Gastrocnemius medialis (tissue), 4 donors: ENCODE measurements at regions of chr18 and their contacts with region 1.

Region 1: DNA sequence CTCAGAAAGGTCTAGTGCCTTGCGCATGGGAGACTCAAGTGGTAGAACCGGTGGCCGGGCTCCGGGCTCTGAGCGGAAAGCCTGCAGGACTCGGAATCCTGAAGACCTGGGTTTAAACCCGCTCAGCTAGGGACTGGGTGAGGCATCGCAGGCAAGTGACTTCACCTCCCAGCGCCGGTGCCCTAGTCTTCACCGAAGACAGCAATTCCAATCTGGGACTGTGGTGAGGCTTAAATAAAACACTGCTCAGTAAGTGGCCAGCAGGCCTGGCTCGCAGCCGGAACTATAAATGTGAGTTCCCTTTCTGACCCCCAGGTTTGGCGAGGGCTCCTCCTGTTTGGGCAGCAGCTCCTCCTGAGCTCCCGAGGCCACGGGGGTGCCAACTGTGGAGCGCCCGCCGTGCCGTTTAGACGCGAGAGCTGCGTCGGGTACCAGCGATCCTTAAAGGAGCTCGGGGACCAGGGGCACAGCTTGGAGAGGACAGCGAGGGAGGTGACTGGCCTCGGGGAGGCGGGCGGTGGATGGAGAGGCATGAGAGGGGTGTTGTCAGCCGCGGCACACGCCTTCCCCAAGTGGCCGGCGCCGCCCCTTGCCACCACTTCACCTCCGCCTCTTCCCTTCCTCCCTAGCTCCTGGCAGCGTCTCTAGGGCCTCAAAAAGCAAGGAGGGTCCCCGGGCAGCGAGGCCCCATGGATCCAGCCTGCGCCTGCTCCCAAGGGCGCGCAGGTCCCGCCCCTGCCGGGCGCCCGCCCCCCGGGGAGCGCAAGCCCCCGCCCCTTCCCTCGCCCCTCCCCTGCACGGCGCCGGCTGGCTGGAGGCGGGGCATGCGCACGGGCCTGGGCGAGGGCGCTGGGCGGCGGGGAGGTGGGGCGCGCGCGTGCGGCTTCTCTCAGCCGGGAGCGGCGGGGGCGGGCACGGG is 736 bp upstream of the MTCL1 start:
- DNase-seq: peak; percentile 81
- ATAC-seq: peak; percentile 72 to 83
- H3K4me3 ChIP-seq: peak overlapping the region; percentile 73 to 90 (median 80)
- H3K27ac ChIP-seq: peak overlapping the region; percentile 94
- H3K4me1 ChIP-seq: peaks cover 15% of the 10 kb centered on the region in 2 donors
- H3K27me3 ChIP-seq: no peaks in the 10 kb centered on the region
- CTCF ChIP-seq: peak in 3 of 5 experiments; percentile 8 to 13 (median 12)
- POLR2A ChIP-seq: peak; percentile 72 to 75

Region 2: DNA sequence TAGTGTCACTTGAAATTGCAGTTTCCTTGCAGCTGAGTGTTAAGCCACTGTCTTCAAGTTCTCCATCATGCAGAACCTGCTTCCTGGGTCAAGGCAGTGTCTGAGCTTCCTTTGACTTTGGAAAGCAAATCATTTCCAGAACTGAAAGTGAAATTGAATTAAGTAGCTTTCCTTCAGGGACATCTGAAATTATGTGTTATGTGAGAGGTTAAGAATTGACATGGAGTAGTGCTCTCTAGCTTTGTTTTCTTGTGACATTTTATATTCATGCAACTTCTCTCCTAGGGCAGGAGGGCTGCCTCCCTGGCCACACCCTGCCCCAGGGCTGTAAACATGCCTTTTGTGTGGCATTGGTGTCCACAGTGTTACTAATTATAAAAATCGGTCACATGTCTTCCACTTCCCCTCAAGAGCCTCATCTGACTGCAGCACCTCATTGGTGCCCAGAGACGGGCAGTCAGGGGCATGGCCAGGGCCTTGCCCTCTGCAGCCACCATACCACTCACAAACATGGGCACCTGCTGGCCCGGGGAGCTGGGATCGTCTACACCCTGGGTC is 81.0 kb before region 1 on chr18:
- in situ Hi-C with region 1: no loop called
- intact Hi-C with region 1: loop called (anchors 2 kb)
- DNase-seq: peak; percentile 71 to 78
- ATAC-seq: peak; percentile 83 to 88
- H3K4me3 ChIP-seq: peak overlapping the region; percentile 13 to 29 (median 24)
- H3K27ac ChIP-seq: peak overlapping the region; percentile 83 to 90 (median 88)
- H3K4me1 ChIP-seq: peaks cover 94 to 96% of the 10 kb centered on the region in 2 donors
- H3K27me3 ChIP-seq: no peaks in the 10 kb centered on the region
- CTCF ChIP-seq: no peak
- POLR2A ChIP-seq: peak; percentile 88 to 98

Region 3: GRCh38 chr18:8788503-8789429 is 84.1 kb after region 1 on chr18:
- in situ Hi-C with region 1: no loop called
- intact Hi-C with region 1: loop called (anchors 2 kb)
- DNase-seq: peak; percentile 49 to 55
- ATAC-seq: peak; percentile 95 to 97
- H3K4me3 ChIP-seq: no peak overlapping the region
- H3K27ac ChIP-seq: peak overlapping the region; percentile 10 to 77 (median 64)
- H3K4me1 ChIP-seq: peaks cover 8 to 14% of the 10 kb centered on the region in 2 donors
- H3K27me3 ChIP-seq: no peaks in the 10 kb centered on the region
- CTCF ChIP-seq: no peak
- POLR2A ChIP-seq: no peak

Region 4: DNA sequence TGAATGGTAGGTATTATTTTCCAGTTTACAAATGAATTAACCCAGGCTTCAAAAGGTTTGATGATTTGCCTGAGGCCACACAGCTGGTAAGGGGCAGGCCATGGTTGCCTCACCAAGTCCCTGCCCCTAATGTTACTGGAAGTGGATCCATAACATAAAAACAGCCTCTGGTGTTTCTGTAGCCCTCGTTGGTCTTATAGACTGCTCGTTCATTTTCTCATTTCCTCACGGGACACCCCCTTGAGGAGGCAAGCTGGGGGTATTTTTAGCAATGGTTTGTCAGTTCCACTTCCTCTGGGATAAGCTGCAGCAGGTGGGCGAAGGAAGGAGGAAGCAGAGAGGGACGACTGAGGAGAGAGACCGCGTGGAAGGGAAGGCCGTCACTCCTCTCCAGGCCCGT is 365.0 kb after region 1 on chr18:
- in situ Hi-C with region 1: no loop called
- intact Hi-C with region 1: no loop called
- DNase-seq: no peak
- ATAC-seq: no peak
- H3K4me3 ChIP-seq: no peak overlapping the region
- H3K27ac ChIP-seq: no peak overlapping the region
- H3K4me1 ChIP-seq: peaks cover 0 to 7% of the 10 kb centered on the region in 2 donors
- H3K27me3 ChIP-seq: no peaks in the 10 kb centered on the region
- CTCF ChIP-seq: no peak
- POLR2A ChIP-seq: no peak

Region 5: GRCh38 chr18:9136315-9137155 is 431.9 kb after region 1 on chr18 and contains the start of gene ANKRD12:
- in situ Hi-C with region 1: no loop called
- intact Hi-C with region 1: loop called (anchors 5 kb)
- DNase-seq: peak; percentile 96 to 97
- ATAC-seq: peak; percentile 72 to 75
- H3K4me3 ChIP-seq: peak within 1 kb of the TSS; percentile 83 to 89 (median 86)
- H3K27ac ChIP-seq: peak within 1 kb of the TSS; percentile 97 to 98 (median 98)
- H3K4me1 ChIP-seq: peaks cover 58 to 64% of the 10 kb centered on the region in 2 donors
- H3K27me3 ChIP-seq: no peaks in the 10 kb centered on the region
- CTCF ChIP-seq: peak in 1 of 5 experiments; percentile 14
- POLR2A ChIP-seq: peak; percentile 93 to 94
- total RNA-seq, gene ANKRD12: 26.9 to 40.1 (median 36.7) TPM